ENCODE measurements at regions of chr19 and their contacts with region 1.

Region 1: DNA sequence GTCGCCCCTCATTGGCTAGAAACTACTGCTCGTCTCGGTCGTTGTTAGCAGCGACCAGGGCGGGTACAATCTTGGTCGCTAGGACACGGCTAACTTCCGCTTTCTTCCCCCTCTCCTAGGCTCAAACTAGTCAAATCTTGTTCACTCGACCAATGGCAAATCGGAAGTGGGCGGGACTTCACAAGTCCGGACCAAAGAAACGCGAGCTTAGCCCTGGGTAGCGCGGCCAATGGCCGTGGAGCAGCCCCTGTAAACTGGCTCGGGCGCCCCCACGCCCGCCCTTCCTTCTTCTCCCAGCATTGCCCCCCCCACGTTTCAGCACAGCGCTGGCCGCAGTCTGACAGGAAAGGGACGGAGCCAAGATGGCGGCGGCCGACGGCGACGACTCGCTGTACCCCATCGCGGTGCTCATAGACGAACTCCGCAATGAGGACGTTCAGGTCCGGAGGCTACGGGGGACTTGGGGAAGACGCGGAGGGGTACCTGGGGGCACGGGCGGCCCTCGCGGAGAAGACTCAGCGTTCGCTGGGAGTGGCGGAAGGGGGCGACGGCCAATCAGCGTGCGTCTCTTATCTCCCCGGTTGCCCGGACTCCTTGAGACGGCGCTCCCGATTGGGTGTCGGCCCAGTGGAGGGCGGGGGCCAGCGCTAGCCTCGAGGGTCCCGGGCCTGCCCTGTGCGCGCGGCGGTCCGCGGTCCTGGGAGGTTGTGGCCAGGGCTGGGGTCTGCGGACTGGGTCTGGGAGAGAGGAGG is at the start of gene PPP2R1A:
- DNase-seq: peak; percentile 100
- ATAC-seq: peak; percentile 95
- H3K4me3 ChIP-seq: peak within 1 kb of the TSS; percentile 92 to 97 (median 94)
- H3K27ac ChIP-seq: peak within 1 kb of the TSS; percentile 89
- H3K4me1 ChIP-seq: peaks cover 37% of the 10 kb centered on the region
- H3K27me3 ChIP-seq: no peaks in the 10 kb centered on the region; a peak in 1 of 5 replicates
- CTCF ChIP-seq: no peak
- EP300 ChIP-seq: no peak
- POLR2A ChIP-seq: peak; percentile 27 to 53; a peak in 2 of 4 replicates
- RAD21 ChIP-seq: no peak; the same call in none of the 2 replicates
- total RNA-seq, gene PPP2R1A: 130 and 141 TPM in 2 replicates

Region 2: DNA sequence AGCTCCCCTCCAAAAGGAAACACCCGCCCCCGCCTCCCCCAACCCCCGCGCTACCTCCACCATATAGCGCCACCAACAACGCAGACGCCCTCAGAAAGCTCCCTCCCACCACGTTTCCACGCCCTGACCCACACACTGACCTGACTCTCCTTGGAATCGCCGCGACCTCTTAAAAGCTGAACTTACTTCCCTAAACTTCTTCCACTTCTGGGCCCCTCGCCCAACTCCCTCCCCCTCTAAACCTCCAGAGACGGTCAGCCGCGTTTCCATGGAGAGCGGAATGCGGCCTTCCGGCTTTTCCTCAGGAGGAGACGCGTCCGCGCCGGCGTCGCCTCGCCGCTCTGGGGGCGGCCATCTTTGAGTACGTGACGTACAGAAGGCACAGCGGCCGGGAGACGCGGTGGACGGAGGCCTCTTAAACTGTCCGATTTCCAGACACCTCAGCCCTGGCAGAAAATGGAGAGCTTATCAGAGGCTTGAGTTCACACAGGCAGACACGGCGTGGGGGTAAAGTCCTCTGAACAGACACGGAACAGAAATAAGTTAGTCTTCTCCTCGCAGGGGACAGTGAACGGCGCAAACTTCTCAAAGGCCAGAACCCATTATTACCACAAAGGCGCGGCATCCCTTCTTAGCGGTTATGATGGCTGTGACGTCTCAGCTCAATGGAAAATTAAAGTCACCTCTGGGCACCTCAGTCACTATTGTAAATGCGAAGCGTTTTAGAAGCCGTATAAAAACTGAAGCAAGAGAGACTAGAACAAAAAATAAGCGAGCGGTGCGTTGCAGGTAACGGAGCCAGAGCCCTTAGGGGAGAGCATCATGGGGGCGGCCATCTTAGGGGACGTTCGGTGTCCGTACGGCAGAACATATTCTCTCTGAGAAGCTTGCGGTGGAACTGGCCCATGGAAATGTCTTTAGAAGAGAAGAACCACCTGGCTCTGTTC is 141.1 kb before region 1 on chr19 and contains the start of gene ZNF432:
- CTCF ChIA-PET with region 1: no interaction called
- POLR2A ChIA-PET with region 1: interaction called, 10 read pairs
- in situ Hi-C with region 1: no loop called
- intact Hi-C with region 1: no loop called
- DNase-seq: peak; percentile 79
- ATAC-seq: peak; percentile 96
- H3K4me3 ChIP-seq: peak within 1 kb of the TSS; percentile 66 to 90 (median 87)
- H3K27ac ChIP-seq: peak within 1 kb of the TSS; percentile 94
- H3K4me1 ChIP-seq: peaks cover 27% of the 10 kb centered on the region
- H3K27me3 ChIP-seq: no peaks in the 10 kb centered on the region; a peak in 1 of 5 replicates
- CTCF ChIP-seq: peak; percentile 27; the same call in 1 of the 2 replicates
- EP300 ChIP-seq: no peak
- POLR2A ChIP-seq: peak; percentile 33 to 59; a peak in 1 of 4 replicates
- RAD21 ChIP-seq: no peak
- total RNA-seq, gene ZNF432: 8.7 and 10.8 TPM in 2 replicates

Region 3: GRCh38 chr19:52120286-52120685 is 69.6 kb before region 1 on chr19:
- CTCF ChIA-PET with region 1: no interaction called
- POLR2A ChIA-PET with region 1: no interaction called
- in situ Hi-C with region 1: no loop called
- intact Hi-C with region 1: no loop called
- DNase-seq: no peak
- ATAC-seq: no peak
- H3K4me3 ChIP-seq: no peak overlapping the region
- H3K27ac ChIP-seq: no peak overlapping the region
- H3K4me1 ChIP-seq: no peaks in the 10 kb centered on the region
- H3K27me3 ChIP-seq: no peaks in the 10 kb centered on the region
- CTCF ChIP-seq: no peak
- EP300 ChIP-seq: no peak
- POLR2A ChIP-seq: no peak
- RAD21 ChIP-seq: no peak

Region 4: GRCh38 chr19:52139252-52140031 is 50.5 kb before region 1 on chr19 and contains the start of gene ZNF616:
- CTCF ChIA-PET with region 1: no interaction called
- POLR2A ChIA-PET with region 1: interaction called, 23 read pairs
- in situ Hi-C with region 1: no loop called
- intact Hi-C with region 1: loop called (anchors 2 kb)
- DNase-seq: peak; percentile 89
- ATAC-seq: peak; percentile 97
- H3K4me3 ChIP-seq: peak within 1 kb of the TSS; percentile 92 to 96 (median 93)
- H3K27ac ChIP-seq: peak within 1 kb of the TSS; percentile 94
- H3K4me1 ChIP-seq: peaks cover 25% of the 10 kb centered on the region
- H3K27me3 ChIP-seq: no peaks in the 10 kb centered on the region; a peak in 1 of 5 replicates
- CTCF ChIP-seq: peak; percentile 97
- EP300 ChIP-seq: 0 out of 4 replicates have a peak, but pooled peaks of 1 of the 2 experiments have one; percentile 7
- POLR2A ChIP-seq: peak; percentile 81 to 83
- RAD21 ChIP-seq: peak; percentile 87
- total RNA-seq, gene ZNF616: 10.4 and 19.8 TPM in 2 replicates

Region 5: GRCh38 chr19:52171321-52172169 is 18.4 kb before region 1 on chr19 and contains the start of gene ZNF836:
- CTCF ChIA-PET with region 1: no interaction called
- POLR2A ChIA-PET with region 1: interaction called, 26 read pairs
- in situ Hi-C with region 1: no loop called
- intact Hi-C with region 1: loop called (anchors 1 kb)
- DNase-seq: peak; percentile 56
- ATAC-seq: peak; percentile 93
- H3K4me3 ChIP-seq: peak within 1 kb of the TSS; percentile 61 to 88 (median 83)
- H3K27ac ChIP-seq: peak within 1 kb of the TSS; percentile 52
- H3K4me1 ChIP-seq: peaks cover 20% of the 10 kb centered on the region
- H3K27me3 ChIP-seq: no peaks in the 10 kb centered on the region; a peak in 1 of 5 replicates
- CTCF ChIP-seq: no peak
- EP300 ChIP-seq: no peak
- POLR2A ChIP-seq: peak; percentile 30 to 34; a peak in 3 of 4 replicates
- RAD21 ChIP-seq: no peak
- total RNA-seq, gene ZNF836: 5.3 and 5.8 TPM in 2 replicates

Region 6: GRCh38 chr19:52221831-52222375 is 32.0 kb after region 1 on chr19:
- CTCF ChIA-PET with region 1: no interaction called
- POLR2A ChIA-PET with region 1: no interaction called
- in situ Hi-C with region 1: no loop called
- intact Hi-C with region 1: loop called (anchors 1 kb)
- DNase-seq: no peak
- ATAC-seq: no peak
- H3K4me3 ChIP-seq: no peak overlapping the region
- H3K27ac ChIP-seq: no peak overlapping the region
- H3K4me1 ChIP-seq: no peaks in the 10 kb centered on the region
- H3K27me3 ChIP-seq: no peaks in the 10 kb centered on the region
- CTCF ChIP-seq: no peak
- EP300 ChIP-seq: no peak
- POLR2A ChIP-seq: no peak
- RAD21 ChIP-seq: no peak

Region 7: GRCh38 chr19:52237771-52238400 is 48.0 kb after region 1 on chr19:
- CTCF ChIA-PET with region 1: no interaction called
- POLR2A ChIA-PET with region 1: no interaction called
- in situ Hi-C with region 1: no loop called
- intact Hi-C with region 1: loop called (anchors 5 kb)
- DNase-seq: peak; percentile 52
- ATAC-seq: peak; percentile 66
- H3K4me3 ChIP-seq: no peak overlapping the region
- H3K27ac ChIP-seq: no peak overlapping the region
- H3K4me1 ChIP-seq: peaks cover 10% of the 10 kb centered on the region
- H3K27me3 ChIP-seq: no peaks in the 10 kb centered on the region
- CTCF ChIP-seq: peak; percentile 85
- EP300 ChIP-seq: no peak
- POLR2A ChIP-seq: no peak
- RAD21 ChIP-seq: peak; percentile 69